AG04449 (cell line): ENCODE measurements at regions of chr10 and their contacts with region 1.

Region 1: DNA sequence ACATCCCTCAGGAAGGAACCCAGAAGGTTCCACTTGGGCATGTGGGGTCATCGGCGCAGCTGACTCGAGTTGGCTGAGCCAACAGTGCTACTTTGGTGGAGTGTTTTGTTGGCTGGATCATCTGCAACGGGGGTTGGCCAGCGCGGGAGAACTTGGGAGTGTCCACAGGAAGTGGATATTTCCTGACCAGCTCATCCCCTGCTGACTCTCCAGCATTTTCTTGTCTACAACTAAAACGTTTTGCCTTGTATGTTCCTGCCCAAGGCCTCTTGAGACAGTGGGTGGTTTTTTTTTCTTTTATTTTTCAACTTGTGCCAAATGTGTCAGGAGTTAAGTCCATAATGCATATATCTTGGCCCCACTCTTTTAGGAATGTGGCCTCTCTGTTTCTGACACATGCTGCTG is 208.6 kb downstream of the ZNF365 start:
- DNase-seq: peak; percentile 99
- H3K4me3 ChIP-seq: no peak overlapping the region
- CTCF ChIP-seq: no peak

Region 2: DNA sequence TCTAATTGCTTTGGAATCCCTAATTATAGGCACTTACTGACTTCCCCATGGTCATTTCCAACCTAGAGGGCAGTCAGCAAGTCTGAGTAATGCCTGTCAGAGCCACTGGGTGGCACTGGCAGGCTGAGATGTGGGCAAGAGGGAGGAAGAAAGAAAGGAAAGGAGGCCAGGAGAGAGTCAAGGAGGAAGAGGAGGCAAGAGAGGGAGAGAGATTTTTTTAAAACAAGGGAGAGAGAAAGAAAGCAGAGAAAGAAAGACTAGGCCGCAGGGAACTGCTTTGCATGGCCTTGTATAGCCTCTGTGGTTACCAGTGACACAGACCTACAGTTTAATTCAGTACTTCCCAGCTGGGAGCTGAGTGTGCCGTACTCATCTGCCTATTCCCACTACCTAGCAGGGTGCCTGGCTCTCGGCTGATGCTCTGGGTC is 11.3 kb after region 1 on chr10:
- CTCF ChIA-PET with region 1: interaction called, 38 read pairs
- POLR2A ChIA-PET with region 1: interaction called, 6 read pairs
- DNase-seq: no peak
- H3K4me3 ChIP-seq: no peak overlapping the region
- CTCF ChIP-seq: peak; percentile 93